ENCODE measurements at regions of chr7 and their contacts with region 1.

Region 1: GRCh38 chr7:135111379-135111778 is 36.5 kb upstream of the TMEM140 start:
- DNase-seq: no peak
- ATAC-seq: no peak
- H3K4me3 ChIP-seq: no peak overlapping the region
- H3K27ac ChIP-seq: no peak overlapping the region
- H3K4me1 ChIP-seq: no peaks in the 10 kb centered on the region
- H3K27me3 ChIP-seq: peaks cover 14% of the 10 kb centered on the region
- CTCF ChIP-seq: no peak

Region 2: DNA sequence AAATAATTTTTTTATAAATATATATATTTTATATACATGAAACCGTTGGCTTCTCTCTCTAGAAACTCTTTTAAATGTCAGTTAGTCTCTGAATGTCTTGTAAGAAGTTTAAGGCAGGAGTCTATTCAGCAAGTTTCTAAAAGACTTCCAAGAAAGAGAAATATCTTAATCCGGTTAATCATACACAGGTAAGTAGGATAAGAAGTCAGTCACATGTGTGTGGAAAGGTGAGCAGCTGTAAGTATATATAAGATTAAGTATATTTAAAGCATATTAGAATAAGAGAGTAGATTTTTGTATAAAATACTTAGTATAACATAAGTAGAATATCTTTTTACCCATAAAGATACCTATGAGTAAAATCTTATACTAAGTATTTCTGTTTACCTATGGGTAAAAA is 76.1 kb before region 1 on chr7:
- CTCF ChIA-PET with region 1: no interaction called
- POLR2A ChIA-PET with region 1: no interaction called
- intact Hi-C with region 1: loop called (anchors 5 kb)
- DNase-seq: no peak
- ATAC-seq: no peak
- H3K4me3 ChIP-seq: no peak overlapping the region
- H3K27ac ChIP-seq: no peak overlapping the region
- H3K4me1 ChIP-seq: no peaks in the 10 kb centered on the region
- H3K27me3 ChIP-seq: peaks cover 24% of the 10 kb centered on the region
- CTCF ChIP-seq: no peak

Region 3: DNA sequence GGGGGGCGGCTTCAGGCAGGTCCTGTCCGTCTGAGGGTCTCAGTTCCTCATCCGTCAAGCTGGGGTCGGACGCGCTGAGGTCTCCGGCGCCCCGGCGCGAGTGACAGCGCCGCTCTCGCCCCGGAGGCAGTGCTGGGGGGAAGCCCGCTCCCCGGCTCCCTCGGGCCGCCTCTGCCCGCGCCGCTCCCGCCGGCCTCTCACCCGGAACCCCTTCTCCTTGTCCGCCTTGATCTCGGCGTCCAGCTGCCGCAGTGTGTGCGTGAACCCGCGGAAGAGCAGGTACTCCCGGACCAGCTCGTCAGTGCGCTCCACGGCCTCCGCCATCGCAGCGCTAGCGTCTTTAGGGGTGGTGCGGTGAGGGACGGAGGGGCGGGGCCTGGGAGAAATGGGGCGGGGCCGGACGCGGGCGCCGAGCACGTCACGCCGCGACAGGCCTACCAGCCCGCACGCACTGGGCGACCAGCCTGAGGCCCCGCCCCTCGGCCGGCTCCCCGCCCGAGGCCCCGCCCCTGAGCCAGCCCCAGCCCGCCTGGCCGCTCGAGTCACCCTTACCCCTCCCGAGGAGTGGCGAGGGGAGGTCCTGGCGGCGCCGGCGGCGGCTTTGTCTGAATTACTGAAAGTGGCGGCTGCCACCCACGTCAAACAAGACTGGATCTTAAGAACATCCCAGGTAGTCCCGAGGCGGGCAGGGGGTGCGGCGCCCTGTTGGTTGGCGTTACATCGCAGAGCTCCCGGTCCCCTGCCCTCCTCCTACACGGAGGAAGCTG is 100.0 kb after region 1 on chr7 and contains the start of gene WDR91:
- CTCF ChIA-PET with region 1: no interaction called
- POLR2A ChIA-PET with region 1: no interaction called
- intact Hi-C with region 1: no loop called
- DNase-seq: peak; percentile 91
- ATAC-seq: peak; percentile 90
- H3K4me3 ChIP-seq: peak within 1 kb of the TSS; percentile 100
- H3K27ac ChIP-seq: no peak within 1 kb of the TSS
- H3K4me1 ChIP-seq: peaks cover 8% of the 10 kb centered on the region; the same call in 1 of the 2 replicates
- H3K27me3 ChIP-seq: no peaks in the 10 kb centered on the region
- CTCF ChIP-seq: peak; percentile 28; the same call in 1 of the 2 replicates
- total RNA-seq, gene WDR91: 12.3 and 23.0 TPM in 2 replicates